ENCODE measurements at regions of chr5 and their contacts with region 1.

Region 1: GRCh38 chr5:98796197-98796972 is 22.9 kb downstream of the RGMB start:
- DNase-seq: peak; percentile 68
- CTCF ChIP-seq: peak; percentile 79

Region 2: DNA sequence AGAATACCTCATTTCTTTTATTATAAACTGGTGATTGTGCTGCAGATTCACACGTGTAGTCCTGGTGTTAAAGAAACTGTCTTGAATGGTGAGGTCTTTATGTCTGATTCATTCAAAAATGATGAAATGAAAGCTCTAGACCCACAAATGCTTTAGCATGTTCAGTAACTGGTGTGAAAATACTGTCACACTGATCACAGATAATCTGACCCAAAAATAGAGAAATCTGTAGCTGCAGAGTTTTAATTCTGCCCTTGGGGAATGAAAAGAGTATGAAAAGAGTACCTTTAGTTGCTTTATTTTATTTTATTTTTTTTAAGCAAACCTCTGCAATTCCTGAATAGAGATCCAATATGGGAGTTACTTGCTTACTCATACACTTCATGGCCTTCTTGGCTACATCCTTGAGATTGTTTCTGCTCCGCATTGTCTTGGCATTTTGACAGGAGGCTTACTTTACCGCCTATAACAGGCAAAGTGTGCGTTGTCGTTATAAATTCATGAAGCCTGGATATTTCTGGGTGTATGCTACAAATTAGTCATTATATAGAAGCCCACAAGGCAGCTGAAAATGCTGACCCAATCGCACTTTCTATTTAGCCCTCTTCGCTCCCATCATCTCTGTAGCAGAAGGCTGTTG is 20.2 kb before region 1 on chr5:
- CTCF ChIA-PET with region 1: interaction called, 97 read pairs
- POLR2A ChIA-PET with region 1: interaction called, 3 read pairs
- DNase-seq: no peak
- CTCF ChIP-seq: no peak

Region 3: DNA sequence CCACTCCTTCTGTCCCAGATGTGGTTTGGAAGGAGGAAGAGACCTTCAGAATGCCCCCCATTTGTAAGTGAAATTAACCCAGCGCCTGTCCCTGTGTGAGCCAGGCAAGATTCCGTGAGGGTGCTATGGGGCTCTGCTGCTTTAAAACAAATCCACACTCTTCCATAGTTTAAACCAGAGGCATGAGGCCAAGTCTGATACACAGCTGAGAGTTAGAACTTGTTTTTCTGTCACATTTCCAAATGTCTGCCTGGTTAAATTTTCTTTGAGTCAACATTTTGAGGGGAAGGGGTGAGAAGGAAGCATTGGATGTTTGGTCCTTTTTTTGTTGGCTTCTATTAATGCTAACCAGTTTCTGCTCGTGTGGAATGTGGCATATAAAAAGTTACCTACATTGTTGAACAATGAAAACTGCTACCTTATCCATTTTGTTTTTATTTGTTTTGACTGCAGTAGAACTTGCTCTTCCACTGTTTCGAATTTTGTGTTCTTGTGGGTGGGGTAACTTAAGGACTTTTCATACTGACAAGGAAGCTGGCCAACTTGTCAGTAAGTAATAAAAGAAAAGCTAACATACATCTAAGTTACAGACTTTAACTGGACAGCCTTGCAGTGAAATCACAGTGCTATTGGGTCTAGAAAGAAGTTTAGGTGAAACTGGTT is 10.1 kb before region 1 on chr5:
- CTCF ChIA-PET with region 1: interaction called, 73 read pairs
- POLR2A ChIA-PET with region 1: no interaction called
- DNase-seq: no peak
- CTCF ChIP-seq: no peak

Region 4: DNA sequence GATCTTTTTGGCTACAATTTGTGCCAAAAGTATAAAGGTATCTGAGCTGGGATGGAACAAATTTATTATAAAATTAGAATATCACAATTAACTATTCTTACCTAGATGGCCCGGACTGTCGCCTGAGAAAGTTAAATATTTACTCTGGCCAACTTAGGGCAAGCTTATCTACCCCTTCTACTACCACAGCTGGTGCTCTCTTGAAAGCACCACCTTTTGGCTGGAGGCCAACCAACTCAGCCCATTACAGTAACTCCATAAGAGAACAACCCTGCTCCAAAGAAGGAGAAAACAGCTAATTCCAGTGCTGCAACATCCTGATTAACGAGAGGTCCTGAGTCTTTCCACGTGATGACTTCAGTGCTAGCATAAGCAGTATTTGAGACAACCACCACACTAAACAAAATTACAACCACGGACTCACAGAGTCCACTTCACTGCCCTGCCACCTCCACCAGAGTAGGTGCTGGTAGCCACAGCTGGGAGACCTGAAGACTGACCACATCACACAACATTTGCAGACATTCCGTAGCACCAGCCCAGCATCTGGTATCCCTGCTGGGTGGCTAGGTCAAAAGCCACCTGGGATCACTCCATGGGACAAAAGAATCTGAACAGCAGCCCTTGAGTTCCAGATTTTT is 20.3 kb after region 1 on chr5:
- CTCF ChIA-PET with region 1: interaction called, 11 read pairs
- POLR2A ChIA-PET with region 1: no interaction called
- DNase-seq: no peak
- CTCF ChIP-seq: no peak